ENCODE measurements at regions of chr11 and their contacts with region 1.

Region 1: GRCh38 chr11:79493555-79494171 is 52.8 kb upstream of the TENM4 start:
- DNase-seq: peak; percentile 68 to 70
- ATAC-seq: peak; percentile 91 to 99
- H3K4me3 ChIP-seq: no peak overlapping the region
- H3K27ac ChIP-seq: no peak overlapping the region
- H3K4me1 ChIP-seq: no peaks in the 10 kb centered on the region
- CTCF ChIP-seq: peak; percentile 74
- EP300 ChIP-seq: no peak
- POLR2A ChIP-seq: no peak
- RAD21 ChIP-seq: peak; percentile 70 to 71

Region 2: DNA sequence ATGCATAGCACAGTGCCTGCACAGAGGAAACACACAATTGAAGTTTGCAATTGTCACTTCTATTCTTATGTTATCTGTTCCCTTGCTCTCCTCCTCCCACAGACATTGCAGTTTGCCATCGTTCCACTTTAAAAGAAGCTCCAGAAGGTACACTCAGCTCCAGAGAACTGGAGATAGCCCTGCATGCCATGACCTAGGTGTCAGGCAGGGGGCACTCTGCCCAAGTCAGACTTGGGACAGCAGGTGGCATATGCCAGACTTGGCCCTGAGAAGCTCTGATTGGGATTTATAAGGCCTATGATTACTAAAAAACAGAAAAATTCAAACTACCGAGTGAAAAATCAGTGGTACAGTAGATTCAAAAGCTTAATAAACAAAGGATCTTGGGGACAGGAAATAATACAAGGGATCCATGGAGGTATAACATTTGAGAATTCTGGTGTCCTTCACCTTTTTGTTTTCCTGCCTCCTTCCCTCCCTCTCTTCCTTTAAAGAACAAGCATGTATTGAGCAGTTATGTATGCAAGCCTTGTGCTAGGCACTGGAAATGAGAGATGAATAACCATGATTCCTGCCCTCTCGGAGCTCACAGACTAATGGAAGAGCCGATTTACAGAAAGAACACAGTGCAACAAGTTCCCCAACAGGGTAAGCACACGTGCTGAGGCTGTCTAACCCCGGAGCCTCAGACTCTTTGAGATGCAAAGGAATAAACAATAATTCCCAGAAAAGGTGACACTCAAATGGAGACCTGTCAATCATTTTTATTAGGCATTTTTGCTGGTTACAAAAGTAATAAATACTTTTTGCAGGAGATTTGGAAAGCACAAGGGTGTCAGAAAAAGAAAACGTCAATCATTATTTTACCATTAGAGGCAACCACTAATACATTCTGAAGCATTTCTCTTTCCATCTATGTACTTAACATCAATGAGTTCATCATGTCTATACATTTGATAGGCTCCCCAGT is 92.7 kb before region 1 on chr11:
- CTCF ChIA-PET with region 1: interaction called, 26 read pairs
- POLR2A ChIA-PET with region 1: no interaction called
- DNase-seq: peak; percentile 22 to 34
- ATAC-seq: peak; percentile 77 to 89; a peak in 4 of 6 replicates
- H3K4me3 ChIP-seq: no peak overlapping the region
- H3K27ac ChIP-seq: no peak overlapping the region
- H3K4me1 ChIP-seq: no peaks in the 10 kb centered on the region
- CTCF ChIP-seq: peak; percentile 50
- EP300 ChIP-seq: no peak
- POLR2A ChIP-seq: no peak
- RAD21 ChIP-seq: peak; percentile 56 to 57

Region 3: DNA sequence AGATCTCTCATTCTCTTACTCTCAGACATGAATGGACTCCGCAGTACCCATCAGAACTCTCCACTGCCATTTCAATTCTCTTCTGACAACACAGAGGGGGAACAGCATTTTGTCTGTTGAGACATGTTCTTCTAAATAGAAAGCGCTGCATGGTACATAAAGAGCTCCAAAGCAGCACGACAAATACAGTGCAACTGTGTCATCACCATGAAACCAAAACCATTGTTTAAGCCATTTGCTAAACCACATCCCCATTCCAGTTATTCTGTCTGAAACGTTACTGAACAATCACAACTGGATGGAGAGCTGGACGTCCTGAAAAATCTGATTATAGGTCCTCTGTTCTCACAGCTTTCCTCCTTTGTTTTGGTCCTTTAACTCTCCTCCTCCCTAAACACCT is 35.0 kb before region 1 on chr11:
- CTCF ChIA-PET with region 1: interaction called, 12 read pairs
- POLR2A ChIA-PET with region 1: no interaction called
- DNase-seq: no peak
- ATAC-seq: no peak
- H3K4me3 ChIP-seq: no peak overlapping the region
- H3K27ac ChIP-seq: no peak overlapping the region
- H3K4me1 ChIP-seq: no peaks in the 10 kb centered on the region
- CTCF ChIP-seq: no peak
- EP300 ChIP-seq: no peak
- POLR2A ChIP-seq: no peak
- RAD21 ChIP-seq: no peak

Region 4: GRCh38 chr11:79482800-79483199 is 10.9 kb before region 1 on chr11:
- CTCF ChIA-PET with region 1: interaction called, 26 read pairs
- POLR2A ChIA-PET with region 1: no interaction called
- DNase-seq: no peak
- ATAC-seq: no peak
- H3K4me3 ChIP-seq: no peak overlapping the region
- H3K27ac ChIP-seq: no peak overlapping the region
- H3K4me1 ChIP-seq: no peaks in the 10 kb centered on the region
- CTCF ChIP-seq: no peak
- EP300 ChIP-seq: no peak
- POLR2A ChIP-seq: no peak
- RAD21 ChIP-seq: no peak

Region 5: DNA sequence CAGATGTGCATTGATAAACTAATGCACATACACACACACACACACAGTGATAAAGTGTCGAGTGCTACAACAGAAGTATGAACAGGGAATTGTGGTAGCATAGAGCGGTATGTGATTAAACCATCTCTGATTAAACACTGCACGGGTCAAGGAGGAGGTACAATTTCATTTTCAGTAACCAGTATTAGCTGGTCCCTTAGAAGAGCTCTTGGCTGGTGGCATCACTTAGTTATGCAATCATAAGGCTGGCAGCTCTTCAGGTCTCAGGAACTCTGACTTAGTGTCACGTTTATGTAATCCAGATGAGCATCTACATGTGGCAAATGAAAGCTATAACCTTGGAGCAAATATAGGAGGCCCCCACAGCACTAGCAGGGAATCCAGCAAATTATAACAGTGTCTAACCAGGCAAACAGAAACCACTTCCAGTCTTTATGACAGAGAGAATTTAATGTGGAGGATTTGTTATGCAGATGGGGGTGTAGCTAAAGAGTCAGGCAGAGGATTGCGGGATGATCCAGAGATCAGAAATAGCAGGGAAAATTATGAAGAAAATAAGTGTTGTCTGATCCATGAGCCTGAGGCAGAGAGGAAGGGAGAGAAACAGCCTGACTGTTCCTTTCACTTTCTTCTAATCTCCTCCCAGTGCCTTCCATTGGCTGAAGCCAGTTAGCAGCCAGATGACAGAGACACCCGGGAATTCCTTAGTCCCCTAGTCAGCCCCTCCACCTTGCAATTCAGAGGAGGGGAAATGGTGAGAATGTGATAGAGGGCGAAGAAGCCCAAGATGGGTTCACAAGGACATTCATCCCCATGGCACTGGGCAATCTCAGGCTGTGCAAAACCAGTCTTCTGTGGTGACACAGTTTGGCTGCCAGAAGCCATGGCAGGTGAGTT is 480.3 kb after region 1 on chr11:
- CTCF ChIA-PET with region 1: no interaction called
- POLR2A ChIA-PET with region 1: no interaction called
- DNase-seq: no peak
- ATAC-seq: no peak
- H3K4me3 ChIP-seq: no peak overlapping the region
- H3K27ac ChIP-seq: no peak overlapping the region
- H3K4me1 ChIP-seq: no peaks in the 10 kb centered on the region
- CTCF ChIP-seq: no peak
- EP300 ChIP-seq: no peak
- POLR2A ChIP-seq: no peak
- RAD21 ChIP-seq: no peak

Measured in A549 (cell line).